Panc1 (cell line): ENCODE measurements at regions of chr6 and their contacts with region 1.

Region 1: GRCh38 chr6:107192830-107193229 is 77.5 kb upstream of the BEND3 start:
- DNase-seq: no peak
- ATAC-seq: no peak
- H3K4me3 ChIP-seq: no peak overlapping the region
- H3K27ac ChIP-seq: no peak overlapping the region
- H3K4me1 ChIP-seq: no peaks in the 10 kb centered on the region
- H3K27me3 ChIP-seq: no peaks in the 10 kb centered on the region
- CTCF ChIP-seq: no peak

Region 2: GRCh38 chr6:106692112-106692818 is 500.6 kb before region 1 on chr6:
- CTCF ChIA-PET with region 1: interaction called, 12 read pairs
- POLR2A ChIA-PET with region 1: no interaction called
- in situ Hi-C with region 1: no loop called
- intact Hi-C with region 1: no loop called
- DNase-seq: no peak
- ATAC-seq: no peak
- H3K4me3 ChIP-seq: no peak overlapping the region
- H3K27ac ChIP-seq: no peak overlapping the region
- H3K4me1 ChIP-seq: 0 out of 2 replicates have a peak, but pooled peaks cover 8% of the 10 kb centered on the region
- H3K27me3 ChIP-seq: 0 out of 2 replicates have a peak, but pooled peaks cover 2% of the 10 kb centered on the region
- CTCF ChIP-seq: no peak